SK-N-SH (cell line): ENCODE measurements at regions of chr2 and their contacts with region 1.

Region 1: DNA sequence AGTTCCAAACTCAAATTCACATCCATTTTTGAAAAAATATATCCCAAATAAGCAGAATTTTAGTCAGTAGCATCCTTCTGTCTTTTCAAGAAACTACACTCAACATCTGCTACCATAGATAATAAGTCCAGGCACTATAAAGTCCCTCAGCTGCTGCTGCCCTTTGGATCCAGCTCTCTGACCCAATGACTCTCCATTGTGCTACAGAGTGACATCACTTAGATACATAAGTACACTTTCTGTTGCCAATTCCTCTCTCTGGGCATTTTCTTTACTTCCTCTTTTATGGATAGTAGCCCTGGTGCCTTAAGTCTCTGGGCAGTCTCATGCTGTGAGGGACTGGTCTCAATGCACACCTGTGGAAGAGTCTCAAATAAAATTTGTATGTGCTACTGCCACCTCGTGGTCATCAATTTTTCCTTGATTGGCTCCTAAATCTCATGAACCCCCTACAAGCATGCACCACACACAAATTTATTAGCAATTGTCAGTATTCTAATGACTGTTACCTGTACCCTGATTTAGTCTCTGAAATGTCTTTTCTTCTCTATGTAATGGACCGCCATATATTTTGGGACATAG is 219.2 kb downstream of the LRP1B start:
- DNase-seq: no peak
- H3K4me3 ChIP-seq: no peak overlapping the region; a peak in 1 of 4 replicates
- H3K27ac ChIP-seq: no peak overlapping the region
- H3K4me1 ChIP-seq: no peaks in the 10 kb centered on the region
- H3K27me3 ChIP-seq: no peaks in the 10 kb centered on the region
- CTCF ChIP-seq: peak; percentile 56
- EP300 ChIP-seq: no peak
- RAD21 ChIP-seq: peak; percentile 45

Region 2: GRCh38 chr2:141820893-141821292 is 90.7 kb before region 1 on chr2:
- CTCF ChIA-PET with region 1: no interaction called
- POLR2A ChIA-PET with region 1: no interaction called
- DNase-seq: no peak
- H3K4me3 ChIP-seq: no peak overlapping the region
- H3K27ac ChIP-seq: no peak overlapping the region
- H3K4me1 ChIP-seq: no peaks in the 10 kb centered on the region; a peak in 1 of 4 replicates
- H3K27me3 ChIP-seq: no peaks in the 10 kb centered on the region
- CTCF ChIP-seq: no peak
- EP300 ChIP-seq: no peak
- RAD21 ChIP-seq: no peak

Region 3: GRCh38 chr2:141923657-141924056 is 12.1 kb after region 1 on chr2:
- CTCF ChIA-PET with region 1: interaction called, 10 read pairs
- POLR2A ChIA-PET with region 1: no interaction called
- DNase-seq: no peak
- H3K4me3 ChIP-seq: no peak overlapping the region
- H3K27ac ChIP-seq: peak overlapping the region in 1 of 2 experiments; percentile 83; a peak in 2 of 4 replicates
- H3K4me1 ChIP-seq: peaks cover 0 to 21% of the 10 kb centered on the region in 2 experiments; a peak in 2 of 4 replicates
- H3K27me3 ChIP-seq: no peaks in the 10 kb centered on the region
- CTCF ChIP-seq: no peak
- EP300 ChIP-seq: no peak
- RAD21 ChIP-seq: no peak